ENCODE measurements at regions of chr15 and their contacts with region 1.

Region 1: DNA sequence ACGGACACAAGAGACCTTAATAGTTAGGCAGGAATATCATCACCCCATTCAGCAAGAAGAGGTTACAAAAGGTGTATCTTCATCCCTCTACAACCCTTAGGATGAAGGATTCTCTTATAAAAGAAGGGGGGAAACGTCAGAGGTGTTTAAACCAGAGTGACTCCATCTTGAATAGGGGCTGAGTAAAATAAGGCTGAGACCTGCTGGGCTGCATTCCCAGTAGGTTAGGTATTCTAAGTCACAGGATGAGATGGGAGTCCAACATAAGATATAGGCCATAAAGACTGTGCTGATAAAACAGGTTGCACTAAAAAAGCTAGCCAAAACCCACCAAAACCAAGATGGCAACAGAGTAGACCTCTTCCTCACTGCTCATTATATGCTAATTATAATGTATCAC is 16.5 kb downstream of the TRPM7 start:
- DNase-seq: no peak
- H3K4me3 ChIP-seq: no peak overlapping the region
- H3K27ac ChIP-seq: no peak overlapping the region
- H3K4me1 ChIP-seq: no peaks in the 10 kb centered on the region
- H3K27me3 ChIP-seq: no peaks in the 10 kb centered on the region
- CTCF ChIP-seq: no peak
- POLR2A ChIP-seq: no peak

Region 2: GRCh38 chr15:50744601-50745000 is 74.5 kb after region 1 on chr15:
- intact Hi-C with region 1: no loop called
- DNase-seq: no peak
- H3K4me3 ChIP-seq: no peak overlapping the region
- H3K27ac ChIP-seq: no peak overlapping the region
- H3K4me1 ChIP-seq: no peaks in the 10 kb centered on the region
- H3K27me3 ChIP-seq: no peaks in the 10 kb centered on the region
- CTCF ChIP-seq: no peak
- POLR2A ChIP-seq: no peak

Region 3: GRCh38 chr15:50786871-50787270 is 116.8 kb after region 1 on chr15:
- intact Hi-C with region 1: no loop called
- DNase-seq: no peak
- H3K4me3 ChIP-seq: no peak overlapping the region
- H3K27ac ChIP-seq: no peak overlapping the region
- H3K4me1 ChIP-seq: no peaks in the 10 kb centered on the region
- H3K27me3 ChIP-seq: no peaks in the 10 kb centered on the region
- CTCF ChIP-seq: no peak
- POLR2A ChIP-seq: no peak

Region 4: GRCh38 chr15:50876989-50877360 is 206.9 kb after region 1 on chr15:
- intact Hi-C with region 1: loop called (anchors 5 to 10 kb)
- DNase-seq: peak; percentile 68 to 92 (median 83)
- H3K4me3 ChIP-seq: peak overlapping the region in 2 of 4 donors; percentile 13 to 55
- H3K27ac ChIP-seq: no peak overlapping the region
- H3K4me1 ChIP-seq: peaks cover 0 to 6% of the 10 kb centered on the region in 2 donors
- H3K27me3 ChIP-seq: no peaks in the 10 kb centered on the region
- CTCF ChIP-seq: peak; percentile 91 to 97 (median 96)
- POLR2A ChIP-seq: no peak